CD8-positive, alpha-beta T cell (primary cell): ENCODE measurements at regions of chr19 and their contacts with region 1.

Region 1: DNA sequence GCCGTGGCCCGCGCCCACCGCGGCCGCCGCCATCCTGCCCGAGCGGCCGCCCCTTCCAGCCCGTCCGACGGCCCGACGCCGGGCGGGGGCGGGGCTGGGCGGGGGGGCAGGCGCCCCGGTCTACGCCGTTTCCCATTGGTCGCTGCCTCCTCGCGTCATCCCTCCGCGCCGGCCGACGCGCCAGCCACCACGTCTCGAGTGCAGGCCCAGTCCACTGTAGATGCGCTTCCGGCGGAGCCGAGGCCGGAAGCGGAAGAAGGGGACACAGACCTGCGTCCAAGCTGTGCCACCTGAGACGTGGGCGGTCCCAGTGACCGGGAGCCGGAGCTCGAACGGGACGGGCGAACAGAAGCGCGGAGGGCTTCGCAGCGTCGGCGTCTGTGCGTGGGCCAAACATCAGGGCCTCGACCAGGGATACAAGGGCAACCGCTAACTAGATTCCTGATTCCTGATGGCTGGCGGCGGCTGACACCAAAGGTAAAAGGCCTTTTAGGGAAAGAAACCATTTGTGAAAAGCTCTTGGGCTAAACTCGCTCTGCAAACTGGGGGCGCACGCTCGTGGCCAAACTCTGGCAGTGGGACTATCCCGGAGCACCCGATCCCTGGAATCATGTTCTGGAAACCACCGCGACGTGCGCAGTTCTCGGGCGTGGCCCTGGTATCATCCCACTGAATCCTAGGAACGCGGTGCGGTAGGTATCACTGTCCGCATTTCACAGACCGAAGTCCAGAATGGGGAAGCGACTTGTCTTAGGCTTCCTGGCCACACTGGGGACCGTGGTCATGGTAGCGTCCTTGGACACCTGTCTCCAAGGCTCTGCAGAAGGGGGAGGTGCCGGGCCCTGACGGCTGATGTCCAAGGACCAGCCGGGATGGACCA is at the start of gene SLC35E1:
- DNase-seq: peak; percentile 80 to 96 (median 89)
- ATAC-seq: peak; percentile 91
- H3K4me3 ChIP-seq: peak within 1 kb of the TSS; percentile 80 to 99
- H3K4me3 Mint-ChIP-seq: peak within 1 kb of the TSS; percentile 95
- H3K27ac ChIP-seq: peak within 1 kb of the TSS; percentile 92 to 99
- H3K27ac Mint-ChIP-seq: peak within 1 kb of the TSS; percentile 99
- H3K4me1 ChIP-seq: peaks cover 34% of the 10 kb centered on the region
- H3K4me1 Mint-ChIP-seq: peaks cover 50% of the 10 kb centered on the region
- H3K27me3 ChIP-seq: no peaks in the 10 kb centered on the region
- H3K27me3 Mint-ChIP-seq: no peaks in the 10 kb centered on the region
- CTCF ChIP-seq: no peak
- total RNA-seq, gene SLC35E1: 92.3 to 95.4 TPM

Region 2: DNA sequence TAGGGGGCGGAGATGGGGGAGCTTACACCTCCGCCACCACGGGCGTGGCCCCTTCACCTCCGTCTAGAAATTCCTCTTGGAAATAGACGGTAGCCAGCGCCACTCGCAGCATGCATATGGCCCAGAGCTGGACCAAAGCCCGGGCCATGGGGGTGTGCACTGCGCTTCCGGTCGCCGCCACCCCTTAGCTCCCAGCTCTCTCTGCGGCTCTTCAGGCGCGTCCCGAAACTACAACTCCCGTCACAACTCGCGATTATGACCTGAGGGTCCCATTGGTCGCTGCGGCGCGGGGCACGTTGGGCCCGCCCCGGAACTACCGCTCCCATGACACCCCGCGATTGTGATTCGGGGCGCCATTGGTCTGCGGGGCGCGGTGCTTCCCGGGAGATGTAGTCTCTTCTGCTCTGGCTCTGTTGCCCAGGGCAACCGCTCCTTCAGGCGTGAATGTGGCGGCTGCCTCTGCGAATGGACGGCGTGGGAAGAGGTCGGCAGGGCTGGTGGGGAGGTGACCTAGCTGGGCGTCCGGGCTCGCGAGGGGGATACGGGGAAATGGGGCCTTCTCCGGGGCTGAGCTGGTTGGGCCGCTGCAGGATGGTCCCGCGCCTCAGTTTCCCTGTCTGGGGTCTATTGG is 76.5 kb before region 1 on chr19 and contains the starts of genes C19orf44 and CALR3:
- CTCF ChIA-PET with region 1: no interaction called
- POLR2A ChIA-PET with region 1: interaction called, 3 read pairs
- intact Hi-C with region 1: loop called in 1 of 2 experiments (anchors 1 kb)
- DNase-seq: peak; percentile 92 to 98 (median 96)
- ATAC-seq: peak; percentile 99
- H3K4me3 ChIP-seq: peak within 1 kb of the TSS; percentile 66 to 89
- H3K4me3 Mint-ChIP-seq: peak within 1 kb of the TSS; percentile 94
- H3K27ac ChIP-seq: peak within 1 kb of the TSS; percentile 67 to 73
- H3K27ac Mint-ChIP-seq: peak within 1 kb of the TSS; percentile 86
- H3K4me1 ChIP-seq: peaks cover 11% of the 10 kb centered on the region
- H3K4me1 Mint-ChIP-seq: peaks cover 14% of the 10 kb centered on the region
- H3K27me3 ChIP-seq: no peaks in the 10 kb centered on the region
- H3K27me3 Mint-ChIP-seq: no peaks in the 10 kb centered on the region
- CTCF ChIP-seq: no peak
- total RNA-seq, gene C19orf44: 0.52 to 0.61 TPM
- total RNA-seq, gene CALR3: not detected

Region 3: GRCh38 chr19:16584248-16585141 is 11.9 kb after region 1 on chr19:
- CTCF ChIA-PET with region 1: interaction called, 7 read pairs
- POLR2A ChIA-PET with region 1: interaction called, 15 read pairs
- intact Hi-C with region 1: loop called (anchors 1 kb)
- DNase-seq: peak; percentile 77 to 99 (median 90)
- ATAC-seq: peak; percentile 80
- H3K4me3 ChIP-seq: peak overlapping the region; percentile 23 to 30
- H3K4me3 Mint-ChIP-seq: peak overlapping the region; percentile 70
- H3K27ac ChIP-seq: peak overlapping the region; percentile 18 to 84
- H3K27ac Mint-ChIP-seq: peak overlapping the region; percentile 94
- H3K4me1 ChIP-seq: peaks cover 76% of the 10 kb centered on the region
- H3K4me1 Mint-ChIP-seq: peaks cover 79% of the 10 kb centered on the region
- H3K27me3 ChIP-seq: no peaks in the 10 kb centered on the region
- H3K27me3 Mint-ChIP-seq: no peaks in the 10 kb centered on the region
- CTCF ChIP-seq: no peak

Region 4: GRCh38 chr19:16594131-16594586 is 21.6 kb after region 1 on chr19:
- CTCF ChIA-PET with region 1: no interaction called
- POLR2A ChIA-PET with region 1: interaction called, 6 read pairs
- intact Hi-C with region 1: loop called in 1 of 2 experiments (anchors 2 kb)
- DNase-seq: peak in 6 of 9 experiments; percentile 28 to 87 (median 53)
- ATAC-seq: peak; percentile 55
- H3K4me3 ChIP-seq: peak overlapping the region; percentile 28 to 54
- H3K4me3 Mint-ChIP-seq: peak overlapping the region; percentile 74
- H3K27ac ChIP-seq: peak overlapping the region; percentile 53 to 70
- H3K27ac Mint-ChIP-seq: peak overlapping the region; percentile 93
- H3K4me1 ChIP-seq: peaks cover 54% of the 10 kb centered on the region
- H3K4me1 Mint-ChIP-seq: peaks cover 73% of the 10 kb centered on the region
- H3K27me3 ChIP-seq: no peaks in the 10 kb centered on the region
- H3K27me3 Mint-ChIP-seq: no peaks in the 10 kb centered on the region
- CTCF ChIP-seq: no peak